A673 (cell line): ENCODE measurements at regions of chr7 and their contacts with region 1.

Region 1: GRCh38 chr7:143380255-143380645 is 895 bp upstream of the ZYX start:
- DNase-seq: peak; percentile 93
- H3K4me3 ChIP-seq: peak overlapping the region; percentile 65
- H3K27ac ChIP-seq: peak overlapping the region; percentile 97
- H3K4me1 ChIP-seq: peaks cover 35% of the 10 kb centered on the region
- H3K27me3 ChIP-seq: no peaks in the 10 kb centered on the region
- CTCF ChIP-seq: peak; percentile 93

Region 2: DNA sequence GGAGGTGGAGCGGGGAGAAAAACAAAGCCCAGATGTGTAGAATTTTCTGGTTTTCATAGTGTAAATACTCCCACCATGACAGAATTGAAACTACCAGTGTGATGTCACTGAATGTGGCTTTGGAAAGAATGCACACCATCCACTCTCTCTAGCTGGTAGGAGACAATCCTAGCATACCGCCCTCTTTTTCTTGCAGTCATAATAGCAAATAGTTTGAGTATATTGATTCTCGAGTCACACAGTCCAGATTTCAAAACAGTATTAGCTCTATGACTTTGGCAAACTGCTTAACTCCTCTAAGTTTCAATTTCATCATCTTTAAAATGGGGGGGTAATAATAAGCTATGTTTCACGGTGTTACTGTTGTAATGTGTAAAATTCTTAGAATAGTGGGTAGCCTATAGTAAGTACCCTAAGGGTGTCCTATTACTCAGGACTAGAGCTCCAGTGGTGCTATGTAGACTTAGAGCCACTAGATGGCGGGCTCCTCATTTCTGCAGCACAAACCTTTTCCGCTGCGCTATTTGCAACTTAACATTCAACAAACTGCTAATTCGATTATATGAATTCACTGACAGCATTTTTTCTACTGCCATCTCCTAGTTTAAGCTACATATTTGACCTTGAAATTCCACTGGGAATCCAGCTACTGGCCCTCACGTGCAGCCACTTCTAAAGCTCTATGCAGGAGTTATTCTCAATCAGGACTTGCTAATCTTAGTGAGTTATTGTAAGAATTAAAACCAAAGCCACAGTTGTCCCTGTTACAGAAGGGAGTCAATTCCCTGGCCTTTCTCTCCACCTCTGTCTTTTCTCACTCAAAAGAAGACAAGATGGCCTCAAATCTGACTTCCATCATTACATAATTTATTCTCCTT is 139.7 kb before region 1 on chr7:
- CTCF ChIA-PET with region 1: no interaction called
- POLR2A ChIA-PET with region 1: no interaction called
- intact Hi-C with region 1: loop called (anchors 1 kb)
- DNase-seq: peak; percentile 86
- H3K4me3 ChIP-seq: no peak overlapping the region
- H3K27ac ChIP-seq: no peak overlapping the region
- H3K4me1 ChIP-seq: peaks cover 6% of the 10 kb centered on the region
- H3K27me3 ChIP-seq: no peaks in the 10 kb centered on the region
- CTCF ChIP-seq: peak; percentile 96

Region 3: GRCh38 chr7:143287935-143288826 is 92.1 kb before region 1 on chr7 and contains the start of gene CASP2:
- CTCF ChIA-PET with region 1: interaction called, 11 read pairs
- POLR2A ChIA-PET with region 1: interaction called, 3 read pairs
- intact Hi-C with region 1: no loop called
- DNase-seq: peak; percentile 98
- H3K4me3 ChIP-seq: peak within 1 kb of the TSS; percentile 80
- H3K27ac ChIP-seq: peak within 1 kb of the TSS; percentile 97
- H3K4me1 ChIP-seq: peaks cover 16% of the 10 kb centered on the region
- H3K27me3 ChIP-seq: no peaks in the 10 kb centered on the region
- CTCF ChIP-seq: peak; percentile 35; the same call in 1 of the 2 replicates
- total RNA-seq, gene CASP2: 57.8 and 76.8 TPM in 2 replicates

Region 4: DNA sequence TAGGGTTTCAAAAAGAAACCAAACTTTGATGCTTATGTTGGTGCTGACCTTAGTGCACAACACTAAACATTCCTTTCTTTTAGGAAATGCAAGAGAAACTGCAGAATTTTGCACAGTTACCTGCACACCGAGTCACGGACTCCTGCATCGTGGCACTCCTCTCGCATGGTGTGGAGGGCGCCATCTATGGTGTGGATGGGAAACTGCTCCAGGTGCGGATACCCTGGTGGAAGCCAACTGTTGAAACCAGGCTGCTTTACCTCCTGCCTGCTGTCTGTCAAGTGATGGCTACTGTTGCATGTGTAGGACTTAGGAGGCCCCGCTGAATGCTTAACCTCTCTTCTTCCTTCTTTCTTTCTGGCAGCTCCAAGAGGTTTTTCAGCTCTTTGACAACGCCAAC is 80.4 kb before region 1 on chr7:
- CTCF ChIA-PET with region 1: interaction called, 3 read pairs
- POLR2A ChIA-PET with region 1: interaction called, 3 read pairs
- intact Hi-C with region 1: loop called (anchors 5 kb)
- DNase-seq: peak; percentile 47
- H3K4me3 ChIP-seq: no peak overlapping the region
- H3K27ac ChIP-seq: no peak overlapping the region
- H3K4me1 ChIP-seq: peaks cover 28% of the 10 kb centered on the region
- H3K27me3 ChIP-seq: no peaks in the 10 kb centered on the region
- CTCF ChIP-seq: peak; percentile 80

Region 5: DNA sequence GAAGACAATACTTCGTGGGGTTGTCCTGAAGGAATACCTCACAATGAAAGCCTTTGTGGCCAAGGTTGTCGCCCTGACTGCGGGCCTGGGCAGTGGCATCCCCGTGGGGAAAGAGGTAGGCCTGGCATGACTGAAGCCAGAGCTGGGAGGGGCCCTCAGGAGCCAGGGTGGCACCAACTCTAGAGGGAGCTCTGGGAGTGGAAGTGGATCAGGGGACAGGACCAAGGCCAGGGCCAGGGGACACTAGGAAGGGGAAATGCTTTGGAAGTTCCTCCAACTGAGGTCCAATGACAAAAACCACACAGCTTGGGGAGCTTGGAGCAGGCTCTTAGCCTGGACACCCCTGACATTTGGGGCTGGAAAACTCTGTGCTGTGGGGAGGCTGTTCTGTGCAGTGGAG is 58.5 kb before region 1 on chr7:
- CTCF ChIA-PET with region 1: no interaction called
- POLR2A ChIA-PET with region 1: no interaction called
- intact Hi-C with region 1: no loop called
- DNase-seq: no peak
- H3K4me3 ChIP-seq: no peak overlapping the region
- H3K27ac ChIP-seq: no peak overlapping the region
- H3K4me1 ChIP-seq: no peaks in the 10 kb centered on the region
- H3K27me3 ChIP-seq: no peaks in the 10 kb centered on the region
- CTCF ChIP-seq: no peak

Region 6: DNA sequence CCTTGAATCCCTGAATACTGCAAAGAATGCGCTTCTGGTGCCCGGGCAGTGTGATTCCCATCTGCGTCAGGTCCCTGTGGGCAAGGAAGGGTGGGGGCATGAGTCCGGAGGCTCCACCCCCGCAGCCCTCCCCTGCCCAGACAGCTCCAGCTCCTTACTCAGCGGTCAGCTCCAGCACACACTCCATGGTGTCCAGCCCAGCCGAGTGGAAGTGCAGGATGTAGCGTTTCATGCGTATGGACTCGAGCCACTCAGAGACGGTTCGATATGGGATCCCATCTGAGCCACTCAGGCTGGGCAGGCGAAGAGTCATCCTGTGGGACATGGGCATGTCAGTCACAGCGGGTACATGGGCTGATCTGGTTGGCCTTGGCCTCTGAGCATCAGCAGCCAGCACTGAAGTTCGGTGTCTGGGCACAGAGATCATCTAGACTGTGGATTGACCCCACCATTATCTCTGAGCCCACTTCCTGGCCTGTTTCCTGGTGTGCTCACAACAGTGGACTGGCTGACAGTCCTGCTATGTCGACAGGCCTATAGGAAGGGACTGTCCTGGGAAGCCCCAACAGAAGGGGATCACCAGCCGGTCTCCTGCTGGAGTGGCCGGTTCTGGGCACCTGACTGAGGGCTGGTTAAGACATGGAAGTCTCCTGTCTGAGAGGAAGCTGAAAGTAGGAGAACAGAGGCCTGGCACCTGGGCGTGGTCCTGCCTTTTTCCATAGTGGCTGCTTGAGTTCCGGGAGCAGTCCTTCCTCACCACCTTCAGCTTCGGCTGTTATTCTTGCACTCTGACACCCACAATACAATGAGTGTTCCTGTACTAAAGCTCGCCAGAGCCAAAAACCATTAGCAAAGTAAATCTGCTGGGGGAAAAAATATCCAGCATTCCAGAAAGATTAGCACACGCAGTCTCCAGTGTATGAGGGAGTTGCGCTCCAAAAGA is 11.5 kb after region 1 on chr7:
- CTCF ChIA-PET with region 1: interaction called, 4 read pairs
- POLR2A ChIA-PET with region 1: interaction called, 11 read pairs
- intact Hi-C with region 1: no loop called
- DNase-seq: no peak
- H3K4me3 ChIP-seq: no peak overlapping the region
- H3K27ac ChIP-seq: no peak overlapping the region
- H3K4me1 ChIP-seq: no peaks in the 10 kb centered on the region
- H3K27me3 ChIP-seq: no peaks in the 10 kb centered on the region
- CTCF ChIP-seq: no peak

Region 7: DNA sequence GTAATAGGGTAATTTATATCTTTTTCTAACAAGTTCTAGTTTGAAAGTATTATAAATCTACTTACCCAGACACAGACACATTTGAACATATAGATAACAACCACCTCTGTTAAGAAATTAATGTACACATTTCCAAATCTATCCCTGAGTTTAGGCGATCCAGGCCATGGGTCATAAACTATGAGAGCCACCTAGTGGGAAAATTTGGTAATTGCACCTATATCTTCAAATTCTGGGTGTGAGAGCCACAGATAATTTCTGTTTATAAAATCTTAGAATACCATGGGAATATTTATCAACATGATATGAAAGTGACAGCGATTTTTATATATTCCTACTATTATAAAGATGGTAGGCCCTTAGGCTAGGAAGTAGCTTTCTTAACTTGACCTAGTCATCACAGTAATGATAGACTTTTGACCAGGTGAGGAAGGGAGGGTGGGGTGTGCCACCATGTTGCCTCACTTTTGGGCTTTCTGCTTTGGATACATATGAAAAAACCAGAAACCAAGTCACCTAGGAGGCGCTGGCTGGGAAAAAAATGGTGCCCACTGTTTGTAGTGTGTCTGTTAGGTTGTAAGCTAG is 36.4 kb after region 1 on chr7:
- CTCF ChIA-PET with region 1: interaction called, 19 read pairs
- POLR2A ChIA-PET with region 1: interaction called, 3 read pairs
- intact Hi-C with region 1: no loop called
- DNase-seq: peak; percentile 65
- H3K4me3 ChIP-seq: no peak overlapping the region
- H3K27ac ChIP-seq: no peak overlapping the region
- H3K4me1 ChIP-seq: peaks cover 5% of the 10 kb centered on the region
- H3K27me3 ChIP-seq: no peaks in the 10 kb centered on the region
- CTCF ChIP-seq: peak; percentile 83

Region 8: GRCh38 chr7:144110272-144110671 is 730.0 kb after region 1 on chr7:
- CTCF ChIA-PET with region 1: no interaction called
- POLR2A ChIA-PET with region 1: no interaction called
- intact Hi-C with region 1: no loop called
- DNase-seq: no peak
- H3K4me3 ChIP-seq: no peak overlapping the region
- H3K27ac ChIP-seq: no peak overlapping the region
- H3K4me1 ChIP-seq: no peaks in the 10 kb centered on the region
- H3K27me3 ChIP-seq: no peaks in the 10 kb centered on the region
- CTCF ChIP-seq: no peak